Activated CD4-positive, alpha-beta memory T cell treated with anti-CD3 and anti-CD28 coated beads for 36 hours (primary cell): ENCODE measurements at regions of chr10 and their contacts with region 1.

Region 1: GRCh38 chr10:102394079-102394800 is 1.3 kb upstream of the NFKB2 start:
- DNase-seq: peak; percentile 99
- H3K4me3 Mint-ChIP-seq: peak overlapping the region; percentile 94
- H3K27ac Mint-ChIP-seq: peak overlapping the region; percentile 99
- H3K4me1 Mint-ChIP-seq: peaks cover 39% of the 10 kb centered on the region
- H3K27me3 Mint-ChIP-seq: no peaks in the 10 kb centered on the region

Region 2: DNA sequence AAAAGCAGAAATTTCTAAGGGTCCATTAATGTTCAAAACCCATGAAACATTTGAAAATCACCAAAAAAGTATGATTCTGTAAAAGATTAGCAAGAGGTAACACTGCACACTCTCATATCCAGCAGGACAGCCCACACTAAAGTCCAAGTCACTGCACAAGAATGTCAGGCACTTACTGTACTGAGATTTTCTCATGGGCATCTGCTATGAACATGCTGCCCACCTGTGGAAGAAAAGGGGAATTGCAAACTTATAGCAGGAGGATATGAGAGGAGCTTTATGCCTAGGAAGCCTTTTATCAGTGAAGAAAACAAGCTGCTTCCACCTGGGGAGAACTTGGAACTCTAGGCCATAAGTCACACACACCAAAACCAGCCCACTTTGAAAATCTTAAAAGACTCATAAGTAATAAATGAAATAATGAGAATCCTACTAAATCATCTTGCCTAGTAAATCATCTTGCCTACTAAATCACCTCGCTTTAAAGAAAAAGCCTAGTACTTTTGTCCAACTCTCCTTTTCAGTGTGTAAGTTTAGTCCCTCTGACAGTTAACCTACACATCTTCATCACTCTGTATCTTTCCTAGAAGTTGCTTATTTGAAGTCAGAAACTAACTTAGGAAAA is 384.3 kb before region 1 on chr10:
- CTCF ChIA-PET with region 1: no interaction called
- POLR2A ChIA-PET with region 1: no interaction called
- intact Hi-C with region 1: no loop called
- DNase-seq: peak; percentile 40
- H3K4me3 Mint-ChIP-seq: no peak overlapping the region
- H3K27ac Mint-ChIP-seq: no peak overlapping the region
- H3K4me1 Mint-ChIP-seq: no peaks in the 10 kb centered on the region
- H3K27me3 Mint-ChIP-seq: no peaks in the 10 kb centered on the region

Region 3: GRCh38 chr10:102114861-102115618 is 279.2 kb before region 1 on chr10:
- CTCF ChIA-PET with region 1: no interaction called
- POLR2A ChIA-PET with region 1: interaction called, 4 read pairs
- intact Hi-C with region 1: loop called (anchors 1 kb)
- DNase-seq: peak; percentile 93
- H3K4me3 Mint-ChIP-seq: peak overlapping the region; percentile 88
- H3K27ac Mint-ChIP-seq: peak overlapping the region; percentile 96
- H3K4me1 Mint-ChIP-seq: peaks cover 58% of the 10 kb centered on the region
- H3K27me3 Mint-ChIP-seq: no peaks in the 10 kb centered on the region

Region 4: DNA sequence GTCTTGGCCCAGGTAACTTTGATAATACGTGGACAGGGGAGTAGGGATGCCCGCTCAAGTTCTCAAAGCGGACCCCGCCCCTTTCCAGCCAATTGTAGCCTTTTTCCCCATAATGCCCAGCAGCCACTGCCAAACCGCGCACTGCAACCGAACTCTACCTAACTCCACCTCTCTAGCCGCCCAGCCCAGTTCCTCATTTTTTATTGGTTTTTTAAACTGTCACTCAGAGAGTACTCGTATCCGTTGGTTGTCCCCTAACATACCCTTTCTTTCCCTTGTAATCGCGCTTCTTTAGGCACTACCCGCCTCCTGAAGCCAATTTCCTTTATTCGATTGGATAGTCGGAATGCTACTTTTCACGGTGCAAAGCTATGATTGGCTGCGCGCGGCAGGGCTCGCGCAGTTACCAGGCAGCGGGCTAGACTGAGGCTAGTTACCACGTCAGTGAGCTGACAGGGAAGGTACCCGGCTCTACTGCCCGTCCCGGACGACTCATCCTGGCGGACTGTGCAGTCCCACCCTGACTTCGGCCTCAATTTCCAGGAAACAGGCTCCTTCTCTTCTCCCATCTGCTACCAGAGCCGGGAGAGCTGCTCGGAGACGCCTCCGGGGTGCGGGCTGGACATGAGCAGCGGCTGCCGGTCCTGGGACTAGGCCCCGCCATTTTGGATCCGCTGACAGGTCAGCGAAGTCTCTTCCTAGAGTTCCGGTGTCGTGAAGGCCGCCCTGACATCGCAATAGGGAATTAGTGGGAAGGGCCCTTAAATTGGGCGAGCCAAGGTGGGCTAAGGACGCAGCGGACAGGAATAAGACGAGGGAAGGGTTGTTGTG is 148.9 kb before region 1 on chr10 and contains the start of gene GBF1:
- CTCF ChIA-PET with region 1: interaction called, 3 read pairs
- POLR2A ChIA-PET with region 1: interaction called, 3 read pairs
- intact Hi-C with region 1: loop called (anchors 1 kb)
- DNase-seq: peak; percentile 95
- H3K4me3 Mint-ChIP-seq: peak within 1 kb of the TSS; percentile 100
- H3K27ac Mint-ChIP-seq: peak within 1 kb of the TSS; percentile 95
- H3K4me1 Mint-ChIP-seq: peaks cover 51% of the 10 kb centered on the region
- H3K27me3 Mint-ChIP-seq: peaks cover 15% of the 10 kb centered on the region
- total RNA-seq, gene GBF1: 42.2 to 44.0 TPM

Region 5: GRCh38 chr10:102420810-102421644 is 26.8 kb after region 1 on chr10 and contains the start of gene FBXL15:
- CTCF ChIA-PET with region 1: interaction called, 125 read pairs
- POLR2A ChIA-PET with region 1: interaction called, 84 read pairs
- intact Hi-C with region 1: loop called (anchors 1 kb)
- DNase-seq: peak; percentile 98
- H3K4me3 Mint-ChIP-seq: peak within 1 kb of the TSS; percentile 94
- H3K27ac Mint-ChIP-seq: peak within 1 kb of the TSS; percentile 92
- H3K4me1 Mint-ChIP-seq: peaks cover 35% of the 10 kb centered on the region
- H3K27me3 Mint-ChIP-seq: peaks cover 20% of the 10 kb centered on the region
- total RNA-seq, gene FBXL15: 10.8 to 11.4 TPM

Region 6: GRCh38 chr10:102461187-102462054 is 67.2 kb after region 1 on chr10:
- CTCF ChIA-PET with region 1: interaction called, 7 read pairs
- POLR2A ChIA-PET with region 1: interaction called, 12 read pairs
- intact Hi-C with region 1: no loop called
- DNase-seq: peak; percentile 95
- H3K4me3 Mint-ChIP-seq: peak overlapping the region; percentile 82
- H3K27ac Mint-ChIP-seq: peak overlapping the region; percentile 47
- H3K4me1 Mint-ChIP-seq: peaks cover 23% of the 10 kb centered on the region
- H3K27me3 Mint-ChIP-seq: no peaks in the 10 kb centered on the region

Region 7: DNA sequence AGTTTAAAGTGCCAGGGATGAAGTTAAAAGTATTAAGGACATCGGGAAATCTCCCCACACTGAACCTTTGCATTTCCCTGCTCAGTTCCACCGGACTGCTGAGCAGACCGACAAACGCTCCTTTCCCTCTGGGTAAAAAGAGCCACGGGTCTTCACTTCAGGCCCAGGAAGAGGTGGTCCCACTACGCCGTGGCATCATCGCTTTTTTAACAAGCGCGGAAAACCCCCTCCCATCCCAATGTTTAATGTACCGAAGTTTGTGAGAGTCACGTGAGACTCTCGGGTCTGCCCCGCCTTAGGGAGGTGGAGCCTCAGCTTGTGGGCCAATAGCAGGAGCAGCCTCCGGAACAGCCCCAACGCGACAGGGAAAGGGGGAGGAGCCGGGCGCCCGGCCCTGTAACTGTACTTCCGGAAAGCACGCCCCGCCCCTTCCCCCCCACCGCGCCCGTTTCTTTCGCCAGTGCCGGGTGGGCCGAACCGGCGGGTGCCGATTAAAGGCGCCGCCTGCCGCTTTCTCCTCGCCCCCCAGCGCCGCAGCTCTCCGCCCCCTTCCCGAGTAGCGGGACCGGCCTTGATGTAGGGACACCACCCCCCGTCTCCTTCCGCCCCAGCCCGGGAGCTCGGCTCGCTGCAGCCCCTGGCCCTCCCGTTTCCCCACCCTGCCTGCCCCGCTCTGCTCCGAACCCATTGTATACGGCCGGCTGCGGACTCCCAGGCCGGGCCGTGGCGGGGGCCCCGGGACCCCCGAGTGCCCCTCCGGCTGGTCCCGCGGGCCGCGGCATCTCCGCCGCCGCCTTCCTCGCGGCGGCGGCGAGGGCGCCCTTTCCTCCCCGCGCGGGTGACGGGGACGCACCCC is 247.9 kb after region 1 on chr10:
- CTCF ChIA-PET with region 1: interaction called, 5 read pairs
- POLR2A ChIA-PET with region 1: no interaction called
- intact Hi-C with region 1: loop called (anchors 2 kb)
- DNase-seq: peak; percentile 99
- H3K4me3 Mint-ChIP-seq: peak overlapping the region; percentile 87
- H3K27ac Mint-ChIP-seq: peak overlapping the region; percentile 95
- H3K4me1 Mint-ChIP-seq: peaks cover 17% of the 10 kb centered on the region
- H3K27me3 Mint-ChIP-seq: no peaks in the 10 kb centered on the region

Region 8: GRCh38 chr10:102752934-102753664 is 358.9 kb after region 1 on chr10:
- CTCF ChIA-PET with region 1: no interaction called
- POLR2A ChIA-PET with region 1: no interaction called
- intact Hi-C with region 1: no loop called
- DNase-seq: peak; percentile 25
- H3K4me3 Mint-ChIP-seq: no peak overlapping the region
- H3K27ac Mint-ChIP-seq: no peak overlapping the region
- H3K4me1 Mint-ChIP-seq: peaks cover 41% of the 10 kb centered on the region
- H3K27me3 Mint-ChIP-seq: no peaks in the 10 kb centered on the region